Activated T-helper 2 cell treated with anti-CD3 and anti-CD28 coated beads, Interferon-gamma antibody, Interleukin-2, Interleukin-4, amounts not matched to agents 10 μg/mL and 5 μg/mL and 100 μg/mL, durations not matched to agents 14 hours and 24 hours and 36 hours (primary cell): ENCODE measurements at regions of chr3 and their contacts with region 1.

Region 1: GRCh38 chr3:177337541-177338331 is 140.5 kb upstream of the TBL1XR1 start:
- DNase-seq: peak; percentile 43
- H3K4me3 Mint-ChIP-seq: no peak overlapping the region
- H3K27ac Mint-ChIP-seq: peak overlapping the region; percentile 87
- H3K4me1 Mint-ChIP-seq: peaks cover 45% of the 10 kb centered on the region
- H3K27me3 Mint-ChIP-seq: no peaks in the 10 kb centered on the region

Region 2: DNA sequence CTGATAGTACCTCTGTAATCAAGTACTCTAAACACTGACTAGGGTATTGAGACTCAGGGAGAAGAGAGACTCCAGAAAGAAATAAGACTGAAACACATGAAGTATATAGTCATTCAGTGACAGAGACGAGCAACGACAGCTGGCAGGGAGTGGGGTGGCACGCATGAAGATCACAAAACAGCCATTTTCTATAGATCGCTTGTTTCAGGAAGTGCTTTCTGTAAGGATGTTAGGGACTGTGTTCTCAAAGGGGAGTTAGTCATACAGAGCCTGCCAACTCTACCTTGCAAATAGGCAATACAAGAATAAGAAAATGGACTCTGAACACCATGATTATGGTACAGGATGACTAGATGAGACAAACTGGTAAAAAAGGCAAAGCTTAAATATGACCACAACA is 280.0 kb before region 1 on chr3:
- intact Hi-C with region 1: loop called (anchors 1 kb)
- DNase-seq: peak; percentile 22
- H3K4me3 Mint-ChIP-seq: no peak overlapping the region
- H3K27ac Mint-ChIP-seq: no peak overlapping the region
- H3K4me1 Mint-ChIP-seq: peaks cover 22% of the 10 kb centered on the region
- H3K27me3 Mint-ChIP-seq: no peaks in the 10 kb centered on the region

Region 3: GRCh38 chr3:177185035-177185574 is 152.6 kb before region 1 on chr3:
- intact Hi-C with region 1: no loop called
- DNase-seq: no peak
- H3K4me3 Mint-ChIP-seq: no peak overlapping the region
- H3K27ac Mint-ChIP-seq: peak overlapping the region; percentile 54
- H3K4me1 Mint-ChIP-seq: peaks cover 31% of the 10 kb centered on the region
- H3K27me3 Mint-ChIP-seq: no peaks in the 10 kb centered on the region

Region 4: GRCh38 chr3:177314897-177315296 is 22.8 kb before region 1 on chr3:
- intact Hi-C with region 1: loop called (anchors 1 kb)
- DNase-seq: no peak
- H3K4me3 Mint-ChIP-seq: no peak overlapping the region
- H3K27ac Mint-ChIP-seq: peak overlapping the region; percentile 49
- H3K4me1 Mint-ChIP-seq: peaks cover 12% of the 10 kb centered on the region
- H3K27me3 Mint-ChIP-seq: peaks cover 2% of the 10 kb centered on the region